ENCODE measurements at regions of chr11 and their contacts with region 1.

Region 1: GRCh38 chr11:125451400-125452124 is 44.5 kb downstream of the FEZ1 start:
- H3K4me3 ChIP-seq: no peak overlapping the region
- H3K27ac ChIP-seq: no peak overlapping the region
- H3K4me1 ChIP-seq: no peaks in the 10 kb centered on the region
- CTCF ChIP-seq: no peak

Region 2: DNA sequence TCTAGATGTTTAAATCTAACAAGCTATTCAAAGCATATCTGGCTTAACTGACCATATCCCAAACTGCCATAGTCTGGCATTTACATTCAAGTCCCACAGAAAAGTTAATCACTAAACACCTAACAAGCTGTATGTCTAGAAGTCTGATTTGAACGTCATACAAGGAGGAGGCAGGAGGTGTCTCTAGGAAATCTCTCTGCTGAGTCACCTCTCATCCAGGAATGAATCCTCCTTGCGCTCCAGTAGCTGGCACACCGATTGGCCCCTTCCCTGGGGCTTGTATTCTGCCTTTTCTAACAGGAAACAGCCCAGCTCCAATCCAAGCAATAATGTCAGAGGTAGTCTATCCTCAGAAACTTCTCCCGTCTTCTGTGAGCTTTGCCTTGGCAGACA is 12.7 kb after region 1 on chr11:
- CTCF ChIA-PET with region 1: interaction called, 35 read pairs
- POLR2A ChIA-PET with region 1: no interaction called
- H3K4me3 ChIP-seq: no peak overlapping the region
- H3K27ac ChIP-seq: no peak overlapping the region
- H3K4me1 ChIP-seq: no peaks in the 10 kb centered on the region
- CTCF ChIP-seq: no peak

Region 3: GRCh38 chr11:125743681-125744080 is 292.1 kb after region 1 on chr11:
- CTCF ChIA-PET with region 1: no interaction called
- POLR2A ChIA-PET with region 1: no interaction called
- H3K4me3 ChIP-seq: no peak overlapping the region
- H3K27ac ChIP-seq: no peak overlapping the region
- H3K4me1 ChIP-seq: no peaks in the 10 kb centered on the region
- CTCF ChIP-seq: no peak

Measured in HEK293 (cell line).